Cardiac septum (tissue), 1 donor: ENCODE measurements at regions of chr9 and their contacts with region 1.

Region 1: GRCh38 chr9:70602321-70603019 is 188.0 kb upstream of the KLF9 start:
- DNase-seq: no peak

Region 2: DNA sequence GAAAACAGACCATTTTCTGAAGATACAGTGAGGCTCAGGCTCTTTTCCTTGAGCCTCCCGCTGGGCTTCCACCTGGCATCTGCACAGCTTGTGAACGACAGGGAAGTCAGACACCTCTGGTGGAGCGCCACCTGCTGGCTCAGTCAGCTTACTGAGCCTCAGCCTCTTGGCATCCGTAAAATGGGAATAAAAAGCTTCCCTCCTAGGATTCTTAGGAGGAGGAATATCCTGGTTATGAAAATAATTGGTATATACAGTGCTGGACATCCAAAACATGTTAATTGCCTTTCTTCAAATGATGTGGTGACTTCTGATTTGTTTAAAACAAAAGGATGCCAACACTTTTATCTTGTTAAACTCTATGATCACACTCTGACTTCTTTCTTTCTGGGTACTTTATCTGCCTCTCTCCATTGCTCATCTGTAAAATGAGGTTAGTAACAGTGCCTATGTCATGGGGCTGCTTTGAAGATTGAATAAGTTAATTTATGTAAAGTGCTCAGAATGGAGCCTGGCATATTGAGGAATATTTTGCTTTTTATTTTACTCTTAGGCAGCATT is 491.3 kb before region 1 on chr9:
- intact Hi-C with region 1: loop called (anchors 10 kb)
- DNase-seq: peak; percentile 83

Region 3: GRCh38 chr9:70340572-70340971 is 261.9 kb before region 1 on chr9:
- intact Hi-C with region 1: loop called (anchors 2 kb)
- DNase-seq: no peak

Region 4: GRCh38 chr9:70419546-70420266 is 182.8 kb before region 1 on chr9:
- intact Hi-C with region 1: loop called (anchors 1 kb)
- DNase-seq: peak; percentile 95